Cardiac septum (tissue), 1 donor: ENCODE measurements at regions of chr5 and their contacts with region 1.

Region 1: DNA sequence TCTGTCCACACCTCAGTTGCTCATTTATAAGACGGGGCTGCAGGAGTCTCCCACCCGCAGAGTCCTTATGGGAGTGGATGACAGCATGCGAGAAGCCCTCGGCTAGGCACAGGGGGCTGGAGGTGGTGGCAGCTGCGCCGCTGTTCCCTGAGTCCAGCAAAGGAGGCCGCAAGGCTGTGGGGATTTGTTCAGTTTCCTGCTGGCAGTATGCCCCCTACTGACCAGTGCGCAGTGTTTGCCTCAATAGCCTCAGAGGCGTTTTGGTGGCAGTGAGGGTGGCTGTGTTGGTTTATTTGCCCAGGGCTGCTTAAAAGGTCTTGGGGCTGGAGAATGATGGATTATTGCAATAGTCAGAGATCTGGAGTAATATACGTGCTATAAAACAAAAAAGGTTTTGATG is 176.3 kb upstream of the OTULINL start:
- DNase-seq: no peak

Region 2: DNA sequence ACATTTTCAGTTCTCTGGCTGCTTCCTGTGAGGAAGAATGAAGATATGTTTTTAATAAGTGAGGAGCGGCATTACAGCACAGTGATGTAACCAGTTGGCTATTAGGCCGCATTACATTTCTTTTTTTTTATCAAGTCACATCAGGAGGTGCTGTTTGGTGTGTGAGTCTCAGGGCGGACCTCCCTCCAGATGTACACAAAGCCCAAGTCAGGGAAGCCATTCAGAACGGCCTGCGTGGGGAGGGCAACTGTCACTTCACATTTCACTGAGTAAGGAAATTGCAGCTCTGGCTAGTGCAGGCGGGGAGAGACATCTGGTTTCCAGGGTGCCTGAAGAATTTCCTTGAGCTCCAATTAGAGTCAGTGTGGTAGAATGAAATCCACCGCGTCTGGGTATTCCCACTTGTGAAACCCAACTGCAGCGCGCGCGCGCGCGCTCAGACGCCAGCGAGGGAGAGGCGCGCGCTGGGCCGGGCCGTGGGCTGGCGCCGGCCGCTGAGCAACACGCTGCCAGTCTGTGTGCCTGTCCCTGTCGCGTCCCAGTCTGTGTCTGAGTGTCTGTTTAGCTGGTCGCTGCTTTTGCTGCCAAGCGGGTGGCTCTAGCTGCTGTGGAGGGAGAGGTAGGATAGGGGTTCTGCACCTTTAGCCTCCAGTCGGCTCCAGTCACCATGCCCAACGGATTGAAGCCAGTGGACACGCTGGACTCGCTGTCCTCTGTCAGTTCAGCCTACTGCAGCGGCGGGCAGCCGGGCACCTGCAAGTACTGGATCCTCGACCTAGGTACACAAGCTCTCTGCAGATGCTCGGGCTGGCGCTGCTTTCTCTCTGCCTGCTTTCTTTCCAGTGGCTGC is 35.5 kb after region 1 on chr5:
- intact Hi-C with region 1: loop called (anchors 5 kb)
- DNase-seq: no peak